Posterior cingulate gyrus (tissue), 11 donors: ENCODE measurements at regions of chr20 and their contacts with region 1.

Region 1: GRCh38 chr20:53547664-53548239 is 45.9 kb downstream of the ZNF217 start:
- DNase-seq: peak in 4 of 10 donors; percentile 3 to 38 (median 27)

Region 2: GRCh38 chr20:52242237-52243230 is 1305.2 kb before region 1 on chr20:
- intact Hi-C with region 1: loop called (anchors 5 kb)
- DNase-seq: no peak

Region 3: GRCh38 chr20:52312132-52312729 is 1235.5 kb before region 1 on chr20:
- intact Hi-C with region 1: loop called (anchors 5 kb)
- DNase-seq: peak in 1 of 10 donors; percentile 47

Region 4: DNA sequence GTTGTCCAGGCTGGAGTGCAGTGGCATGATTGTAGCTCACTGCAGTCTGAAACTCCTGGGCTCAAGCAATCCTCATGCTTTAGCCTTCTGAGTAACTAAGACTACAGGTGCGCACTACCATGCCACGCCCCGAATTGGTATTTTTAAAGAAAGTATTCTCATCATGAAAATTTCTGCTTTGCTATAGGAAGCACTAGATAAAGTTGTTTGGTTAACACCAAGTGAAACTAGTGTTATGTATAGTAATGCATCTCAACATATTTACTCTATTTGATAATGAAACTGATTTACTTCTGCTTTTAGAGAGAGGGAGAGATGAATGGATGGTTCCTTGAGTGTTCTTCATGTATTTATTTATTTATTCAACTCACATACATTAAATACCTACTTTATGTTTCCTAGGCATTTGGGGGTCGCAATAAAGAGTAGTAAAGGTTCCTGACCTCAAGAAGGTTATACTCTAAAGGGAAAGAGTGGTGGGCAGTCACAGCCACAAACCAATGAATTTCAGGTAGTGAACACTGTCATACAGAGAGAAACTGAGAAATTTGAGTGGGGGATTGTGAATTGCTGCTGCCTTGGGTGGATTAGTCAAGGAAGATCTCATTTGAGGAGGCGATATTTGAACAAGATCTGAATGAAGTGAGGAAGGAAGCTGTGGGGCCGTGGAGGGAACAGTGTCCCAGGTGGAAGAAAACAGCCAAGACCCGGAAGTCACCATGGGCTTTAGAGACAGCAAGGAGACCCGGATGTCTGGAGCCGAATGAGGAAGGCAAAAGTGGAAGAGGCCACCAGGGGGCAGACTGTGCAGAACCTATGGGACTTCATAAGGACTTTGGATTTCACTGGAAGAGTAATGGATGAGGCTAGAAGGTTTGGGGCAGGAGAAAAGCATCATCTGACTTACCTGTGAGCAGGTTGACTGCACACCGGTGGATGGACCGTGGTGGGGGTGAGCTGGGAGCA is 390.0 kb before region 1 on chr20:
- intact Hi-C with region 1: loop called (anchors 5 kb)
- DNase-seq: peak in 4 of 10 donors; percentile 14 to 83 (median 37)